ENCODE measurements at regions of chr1 and their contacts with region 1.

Region 1: GRCh38 chr1:77533660-77534305 is 148.7 kb downstream of the ZZZ3 start:
- DNase-seq: peak; percentile 79

Region 2: DNA sequence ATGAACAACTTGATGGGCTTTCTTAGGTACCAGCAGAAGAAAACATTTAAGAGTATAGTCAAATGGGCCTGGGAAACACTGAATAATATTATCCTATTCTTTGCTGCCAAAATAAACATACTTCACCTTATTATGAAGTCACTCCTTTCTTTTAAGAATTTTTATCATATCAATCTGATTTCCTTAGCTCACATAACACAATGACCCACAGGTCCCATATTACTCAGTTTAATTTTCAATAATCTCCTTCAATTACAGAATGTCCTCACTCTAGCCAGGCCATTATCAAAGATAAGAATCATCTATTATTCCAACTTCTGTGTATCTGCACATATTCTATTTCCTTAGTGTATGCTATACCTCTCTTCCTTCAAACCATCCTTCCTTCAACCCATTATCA is 377.6 kb before region 1 on chr1:
- intact Hi-C with region 1: loop called (anchors 5 kb)
- DNase-seq: no peak

Region 3: DNA sequence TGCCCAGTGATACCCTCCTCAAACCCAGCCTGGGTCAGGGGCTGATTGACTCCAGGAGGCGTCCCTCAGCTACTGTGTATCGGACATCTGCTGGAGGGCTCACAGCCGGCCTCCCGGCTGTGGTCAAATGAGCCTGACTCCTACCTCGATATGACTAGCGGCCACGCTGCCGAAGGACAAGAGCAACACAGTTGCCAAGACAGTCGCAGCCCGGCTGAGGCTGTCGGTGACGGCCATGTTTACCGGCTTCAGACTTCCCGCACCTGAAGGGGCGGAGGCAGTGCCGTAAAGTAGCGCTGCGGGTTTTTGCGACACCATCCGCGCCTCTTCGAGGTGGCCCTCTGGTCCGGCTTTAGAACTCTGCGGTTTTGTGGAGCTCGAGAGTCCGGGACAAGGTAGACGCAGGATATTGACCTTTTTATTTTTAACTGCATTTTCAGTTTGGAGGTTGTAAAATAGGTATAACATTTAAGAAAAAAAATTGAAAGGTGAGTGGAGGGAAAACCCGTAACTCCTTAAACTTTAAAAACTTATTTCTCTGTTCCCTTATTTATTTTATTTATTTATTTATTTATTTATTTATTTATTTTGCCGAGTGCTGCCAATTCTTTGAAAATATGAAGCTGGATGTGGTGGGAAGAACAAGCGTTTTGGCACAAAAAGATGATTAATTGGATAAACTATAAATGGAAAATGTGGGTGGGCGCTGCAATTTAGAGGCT is 314.5 kb before region 1 on chr1 and contains the start of gene PIGK:
- intact Hi-C with region 1: loop called (anchors 10 kb)
- DNase-seq: peak; percentile 95
- total RNA-seq, gene PIGK: 24.1 TPM

Region 4: DNA sequence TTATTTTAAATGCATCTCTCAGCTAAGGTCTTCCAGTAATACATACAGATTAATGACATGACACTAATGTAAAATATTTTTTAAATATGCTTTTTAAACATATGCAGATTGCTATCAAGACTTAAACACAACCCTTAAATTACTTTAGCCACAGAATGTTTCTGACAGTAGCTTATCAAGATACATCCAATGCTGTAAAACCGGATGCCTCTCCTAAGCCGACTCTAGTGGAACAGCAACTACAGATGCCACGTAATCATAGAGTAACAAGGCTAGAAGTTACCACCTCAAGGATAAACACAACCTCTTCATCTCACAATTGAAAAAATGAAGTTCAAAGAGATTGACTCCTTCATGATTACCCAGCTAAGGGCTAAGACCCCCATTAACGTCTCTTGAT is 80.3 kb after region 1 on chr1:
- intact Hi-C with region 1: no loop called
- DNase-seq: no peak

Measured in cardiac septum (tissue), 1 donor.